ENCODE measurements at regions of chr19 and their contacts with region 1.

Region 1: DNA sequence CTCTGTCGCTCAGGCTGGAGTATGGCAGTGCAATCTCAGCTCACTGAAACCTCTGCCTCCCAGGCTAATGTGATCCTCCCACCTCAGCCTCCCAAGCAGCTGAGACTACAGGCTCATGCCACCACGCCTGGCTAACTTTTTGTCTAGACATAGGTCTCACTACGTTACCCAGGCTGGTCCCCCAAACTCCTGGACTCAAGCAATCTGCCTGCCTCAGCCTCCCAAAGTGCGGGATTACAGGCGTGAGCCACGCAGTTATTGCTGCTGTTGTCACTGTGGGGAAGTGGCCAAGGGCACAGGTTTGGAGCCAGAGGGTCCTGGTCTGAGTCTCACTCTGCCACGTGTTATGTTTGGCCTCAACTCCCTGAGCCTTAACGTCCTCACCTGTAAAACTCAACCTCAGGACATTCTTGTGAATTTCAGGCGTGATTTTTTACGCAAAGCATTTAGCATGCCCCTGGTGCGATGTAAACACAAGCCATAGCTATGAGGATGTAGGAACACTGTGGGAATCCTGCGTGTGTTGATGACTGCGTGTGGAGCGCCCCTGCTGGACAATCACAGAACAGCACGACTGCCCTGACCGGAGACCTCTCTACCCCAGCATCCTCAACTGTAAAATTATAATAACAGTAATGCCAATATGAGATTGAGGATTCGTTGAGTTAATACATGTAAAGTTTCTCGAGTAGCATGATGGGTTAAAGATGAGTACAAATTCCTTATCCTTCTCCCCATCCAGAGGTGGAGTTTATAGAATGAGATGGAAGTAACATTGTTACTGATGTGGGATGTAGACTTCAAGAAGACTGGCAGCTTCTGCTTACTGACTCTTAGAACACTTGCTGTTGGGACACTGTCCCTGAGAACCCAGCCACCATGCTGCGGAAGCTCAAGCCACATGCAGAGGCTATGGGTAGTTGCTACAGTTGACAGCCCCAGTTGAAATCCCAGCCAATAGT is 41.8 kb upstream of the PNMA8B start:
- DNase-seq: no peak
- H3K4me3 ChIP-seq: no peak overlapping the region
- CTCF ChIP-seq: peak; percentile 86

Region 2: GRCh38 chr19:46361915-46362314 is 175.5 kb before region 1 on chr19:
- CTCF ChIA-PET with region 1: no interaction called
- POLR2A ChIA-PET with region 1: no interaction called
- DNase-seq: no peak
- H3K4me3 ChIP-seq: no peak overlapping the region
- CTCF ChIP-seq: no peak

Region 3: GRCh38 chr19:46513461-46514236 is 23.8 kb before region 1 on chr19:
- CTCF ChIA-PET with region 1: interaction called, 126 read pairs
- POLR2A ChIA-PET with region 1: no interaction called
- DNase-seq: no peak
- H3K4me3 ChIP-seq: no peak overlapping the region
- CTCF ChIP-seq: peak; percentile 76

Region 4: GRCh38 chr19:46571531-46571930 is 34.1 kb after region 1 on chr19:
- CTCF ChIA-PET with region 1: interaction called, 16 read pairs
- POLR2A ChIA-PET with region 1: no interaction called
- DNase-seq: no peak
- H3K4me3 ChIP-seq: no peak overlapping the region
- CTCF ChIP-seq: peak; percentile 15